Activated CD4-positive, alpha-beta T cell treated with anti-CD3 and anti-CD28 coated beads, Interleukin-2, amount 10 ng/mL, durations not matched to agents 24 days and 14 days (primary cell): ENCODE measurements at regions of chr7 and their contacts with region 1.

Region 1: GRCh38 chr7:67302113-67303039 is 305.7 kb downstream of the TYW1 start:
- DNase-seq: peak; percentile 99
- H3K4me3 Mint-ChIP-seq: peak overlapping the region; percentile 90
- H3K27ac Mint-ChIP-seq: peak overlapping the region; percentile 97
- H3K4me1 Mint-ChIP-seq: peaks cover 26% of the 10 kb centered on the region
- H3K27me3 Mint-ChIP-seq: peaks cover 2% of the 10 kb centered on the region

Region 2: GRCh38 chr7:67045496-67045995 is 256.8 kb before region 1 on chr7:
- intact Hi-C with region 1: loop called (anchors 5 kb)
- DNase-seq: no peak
- H3K4me3 Mint-ChIP-seq: no peak overlapping the region
- H3K27ac Mint-ChIP-seq: no peak overlapping the region
- H3K4me1 Mint-ChIP-seq: peaks cover 4% of the 10 kb centered on the region
- H3K27me3 Mint-ChIP-seq: no peaks in the 10 kb centered on the region

Region 3: GRCh38 chr7:67547176-67547907 is 245.0 kb after region 1 on chr7:
- intact Hi-C with region 1: no loop called
- DNase-seq: no peak
- H3K4me3 Mint-ChIP-seq: no peak overlapping the region
- H3K27ac Mint-ChIP-seq: no peak overlapping the region
- H3K4me1 Mint-ChIP-seq: no peaks in the 10 kb centered on the region
- H3K27me3 Mint-ChIP-seq: no peaks in the 10 kb centered on the region